Activated CD8-positive, alpha-beta T cell treated with anti-CD3 and anti-CD28 coated beads, Interleukin-2, amount 10 ng/mL, durations not matched to agents 7 days and 5 days (primary cell): ENCODE measurements at regions of chr3 and their contacts with region 1.

Region 1: DNA sequence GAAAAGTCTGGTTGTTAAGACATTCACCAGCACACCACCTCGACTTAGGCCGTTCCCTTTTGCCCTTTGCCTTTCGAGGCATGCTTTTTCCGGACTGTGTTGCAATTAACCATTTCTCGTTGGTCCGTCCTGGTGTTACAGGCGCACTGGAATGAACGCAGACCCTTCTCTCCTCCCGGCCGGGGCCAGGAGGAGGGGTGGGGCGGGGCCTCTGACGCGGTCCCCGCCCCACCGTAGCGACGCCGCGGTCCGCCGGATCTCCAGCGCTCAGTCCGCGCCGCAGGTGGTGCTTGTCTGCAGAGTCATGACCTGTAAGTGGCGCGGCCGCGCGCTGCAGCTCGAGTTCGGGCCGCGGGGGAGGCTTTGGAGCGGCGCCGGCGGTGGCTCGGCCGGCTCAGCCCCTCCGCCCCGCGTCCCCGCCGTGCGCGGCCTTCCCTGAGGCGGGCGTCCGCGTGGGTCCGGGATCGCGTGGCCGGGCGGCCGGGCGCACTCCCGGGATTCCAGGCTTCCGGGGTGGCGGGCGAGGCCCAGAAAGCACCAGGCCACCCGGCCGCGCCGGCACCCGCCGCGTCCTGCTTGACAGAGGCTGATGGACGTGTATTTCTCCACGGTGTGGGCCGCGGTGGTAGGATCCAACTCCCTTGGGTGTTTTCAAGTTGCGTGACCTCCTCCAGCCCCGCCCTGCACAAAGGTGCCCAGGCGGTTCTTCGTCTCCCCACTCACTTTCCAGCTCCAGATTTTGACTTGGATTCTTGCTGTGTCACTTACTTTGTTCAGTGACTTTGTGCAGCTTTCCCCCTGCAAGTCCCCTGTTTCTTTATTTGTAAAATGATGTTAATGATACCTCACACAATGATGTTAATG is at the start of gene NIT2:
- DNase-seq: peak; percentile 86
- ATAC-seq: peak; percentile 98
- H3K4me3 Mint-ChIP-seq: peak within 1 kb of the TSS; percentile 94
- H3K27ac Mint-ChIP-seq: peak within 1 kb of the TSS; percentile 93
- H3K4me1 Mint-ChIP-seq: peaks cover 23% of the 10 kb centered on the region
- H3K27me3 Mint-ChIP-seq: no peaks in the 10 kb centered on the region
- total RNA-seq, gene NIT2: 39.5 to 46.2 TPM

Region 2: DNA sequence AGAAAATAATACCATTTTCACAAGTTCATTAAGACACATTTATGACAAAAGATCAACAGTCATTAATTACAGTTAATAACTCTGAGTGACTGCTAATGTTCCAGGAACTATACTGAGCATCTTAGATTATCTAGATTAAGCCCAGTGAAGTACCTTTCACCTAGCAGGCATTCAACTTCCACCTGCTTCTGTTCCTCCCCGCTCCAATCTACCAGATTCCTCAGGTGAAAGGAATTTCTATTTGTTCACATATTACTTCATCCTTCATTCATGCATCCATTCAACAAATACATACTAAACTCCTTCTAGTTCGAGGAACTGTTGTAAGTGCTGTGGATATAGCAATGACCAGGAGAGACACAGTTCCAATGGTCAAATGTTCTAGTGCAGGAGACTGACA is 359.8 kb before region 1 on chr3:
- CTCF ChIA-PET with region 1: no interaction called
- POLR2A ChIA-PET with region 1: no interaction called
- DNase-seq: no peak
- ATAC-seq: no peak
- H3K4me3 Mint-ChIP-seq: no peak overlapping the region
- H3K27ac Mint-ChIP-seq: no peak overlapping the region
- H3K4me1 Mint-ChIP-seq: peaks cover 9% of the 10 kb centered on the region
- H3K27me3 Mint-ChIP-seq: no peaks in the 10 kb centered on the region

Region 3: DNA sequence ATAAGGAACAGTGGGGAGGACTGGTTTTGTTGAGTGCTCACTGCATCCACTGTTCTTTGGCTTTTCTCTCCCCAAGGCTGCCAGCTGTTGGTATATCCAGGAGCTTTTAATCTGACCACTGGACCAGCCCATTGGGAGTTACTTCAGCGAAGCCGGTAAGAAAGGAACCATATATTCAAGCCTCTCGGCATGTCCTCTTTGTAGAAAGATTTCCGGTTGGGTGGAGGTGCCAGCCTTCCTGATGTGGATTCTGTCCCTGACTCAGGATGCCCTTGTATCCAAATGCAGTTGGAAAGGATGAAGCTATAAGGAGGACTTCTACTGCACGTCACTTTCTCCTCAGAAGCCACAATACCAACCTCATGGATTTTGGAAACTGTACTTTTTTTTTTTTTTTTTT is 14.0 kb after region 1 on chr3:
- CTCF ChIA-PET with region 1: interaction called, 8 read pairs
- POLR2A ChIA-PET with region 1: interaction called, 10 read pairs
- DNase-seq: no peak
- ATAC-seq: no peak
- H3K4me3 Mint-ChIP-seq: no peak overlapping the region
- H3K27ac Mint-ChIP-seq: no peak overlapping the region
- H3K4me1 Mint-ChIP-seq: peaks cover 7% of the 10 kb centered on the region
- H3K27me3 Mint-ChIP-seq: no peaks in the 10 kb centered on the region

Region 4: GRCh38 chr3:100370756-100371155 is 36.0 kb after region 1 on chr3:
- CTCF ChIA-PET with region 1: no interaction called
- POLR2A ChIA-PET with region 1: no interaction called
- DNase-seq: no peak
- ATAC-seq: no peak
- H3K4me3 Mint-ChIP-seq: no peak overlapping the region
- H3K27ac Mint-ChIP-seq: no peak overlapping the region
- H3K4me1 Mint-ChIP-seq: no peaks in the 10 kb centered on the region
- H3K27me3 Mint-ChIP-seq: no peaks in the 10 kb centered on the region

Region 5: DNA sequence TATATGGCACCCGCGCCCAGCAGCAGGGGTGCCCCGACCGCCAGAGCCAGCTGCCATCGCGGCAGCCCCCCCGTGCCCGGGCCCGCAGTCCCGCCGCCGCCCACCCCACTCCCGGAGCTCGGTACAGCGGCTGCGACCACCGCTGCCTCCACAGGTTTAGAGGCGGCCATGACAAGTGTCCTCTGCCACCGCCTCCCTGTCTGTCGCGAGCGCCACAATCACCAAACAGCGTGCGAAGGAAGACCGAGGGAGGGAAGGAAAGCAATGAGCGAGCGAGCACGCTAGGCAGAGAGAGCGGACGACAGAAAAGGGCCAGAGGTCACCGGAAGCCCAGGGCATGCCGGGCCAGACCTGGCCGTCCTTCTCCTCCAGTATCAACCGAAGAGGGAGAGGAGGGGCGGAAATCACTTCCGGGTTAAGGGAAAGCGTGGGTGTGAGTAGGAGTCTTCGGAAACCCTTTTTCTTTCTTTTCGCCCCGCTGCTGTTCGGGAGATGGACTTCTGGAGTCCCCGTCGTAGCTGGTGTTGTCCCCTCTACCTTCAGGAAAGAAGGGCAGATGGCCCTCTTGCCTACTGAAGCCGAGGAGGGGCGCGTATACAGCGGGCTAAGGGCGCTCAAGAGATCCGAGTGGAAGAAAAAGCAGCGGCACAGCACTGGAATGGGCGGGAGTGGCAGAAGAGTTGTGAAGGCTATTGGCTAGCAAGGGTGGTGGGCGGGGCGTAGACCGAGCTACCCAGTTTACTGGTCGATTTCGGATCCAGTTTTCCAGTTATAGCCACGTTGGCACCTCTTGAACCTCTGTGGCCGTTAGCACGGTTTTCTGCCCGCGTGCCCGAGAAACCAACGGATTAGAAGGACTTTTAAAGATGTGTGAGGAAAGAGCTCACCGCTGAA is 66.3 kb after region 1 on chr3 and contains the starts of genes LNP1 and TOMM70:
- CTCF ChIA-PET with region 1: interaction called, 4 read pairs
- POLR2A ChIA-PET with region 1: interaction called, 18 read pairs
- DNase-seq: peak; percentile 97
- ATAC-seq: peak; percentile 95
- H3K4me3 Mint-ChIP-seq: peak within 1 kb of the TSS; percentile 92
- H3K27ac Mint-ChIP-seq: peak within 1 kb of the TSS; percentile 98
- H3K4me1 Mint-ChIP-seq: peaks cover 57% of the 10 kb centered on the region
- H3K27me3 Mint-ChIP-seq: no peaks in the 10 kb centered on the region
- total RNA-seq, gene LNP1: 1.4 TPM
- total RNA-seq, gene TOMM70: 42.1 to 43.8 TPM